ENCODE measurements at regions of chr12 and their contacts with region 1.

Region 1: GRCh38 chr12:74415633-74416032 is 122.0 kb upstream of the ATXN7L3B start:
- DNase-seq: no peak
- H3K4me3 ChIP-seq: no peak overlapping the region
- H3K27ac ChIP-seq: no peak overlapping the region
- H3K27me3 ChIP-seq: no peaks in the 10 kb centered on the region
- CTCF ChIP-seq: peak; percentile 40 to 78 (median 64)

Region 2: DNA sequence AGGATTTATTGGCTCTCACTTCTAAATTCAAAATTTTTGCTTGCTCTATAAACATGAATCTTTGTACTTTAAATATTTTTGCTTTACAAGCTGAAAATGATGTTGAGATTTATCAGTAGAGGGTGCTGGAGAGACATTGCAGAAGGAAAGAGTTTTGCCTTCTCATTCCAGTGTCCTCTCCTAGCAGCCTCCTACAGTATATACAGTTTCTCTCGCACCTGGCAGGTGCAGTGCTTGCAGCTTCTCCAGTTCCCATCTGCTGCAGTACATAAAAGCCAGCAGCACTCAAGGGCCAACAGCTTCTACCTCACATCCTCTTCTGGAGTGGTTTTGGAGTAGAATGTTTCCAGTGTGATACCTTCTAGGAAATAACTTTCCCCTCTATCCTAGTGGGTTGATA is 479.8 kb before region 1 on chr12:
- intact Hi-C with region 1: loop called (anchors 5 to 10 kb)
- DNase-seq: peak in 1 of 10 donors; percentile 28
- H3K4me3 ChIP-seq: no peak overlapping the region
- H3K27ac ChIP-seq: no peak overlapping the region
- H3K27me3 ChIP-seq: no peaks in the 10 kb centered on the region
- CTCF ChIP-seq: peak in 50 of 56 donors; percentile 21 to 65 (median 45)

Region 3: DNA sequence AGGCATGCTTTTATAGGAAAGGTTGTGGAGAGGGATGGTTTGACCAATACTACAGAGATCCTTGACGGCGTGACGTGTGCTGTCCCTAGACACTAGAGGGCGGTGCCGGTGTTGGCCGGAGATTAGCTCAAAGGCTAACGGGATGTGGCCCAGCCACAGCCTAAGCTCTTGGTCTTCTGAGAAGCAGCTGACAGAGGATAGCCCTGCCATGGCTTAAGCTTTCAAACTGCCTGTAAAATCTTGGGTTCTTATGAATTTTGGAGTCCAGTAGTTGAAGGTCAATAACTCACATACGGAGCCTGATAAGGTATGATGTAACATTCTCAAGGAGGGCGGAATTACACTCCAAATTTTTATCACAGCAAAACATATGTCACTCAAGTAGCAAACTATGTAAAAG is 393.7 kb before region 1 on chr12:
- intact Hi-C with region 1: loop called in 1 of 2 experiments (anchors 5 kb)
- DNase-seq: peak in 9 of 10 donors; percentile 25 to 65 (median 50)
- H3K4me3 ChIP-seq: no peak overlapping the region
- H3K27ac ChIP-seq: no peak overlapping the region
- H3K27me3 ChIP-seq: no peaks in the 10 kb centered on the region
- CTCF ChIP-seq: peak in 55 of 56 donors; percentile 14 to 78 (median 54)

Region 4: DNA sequence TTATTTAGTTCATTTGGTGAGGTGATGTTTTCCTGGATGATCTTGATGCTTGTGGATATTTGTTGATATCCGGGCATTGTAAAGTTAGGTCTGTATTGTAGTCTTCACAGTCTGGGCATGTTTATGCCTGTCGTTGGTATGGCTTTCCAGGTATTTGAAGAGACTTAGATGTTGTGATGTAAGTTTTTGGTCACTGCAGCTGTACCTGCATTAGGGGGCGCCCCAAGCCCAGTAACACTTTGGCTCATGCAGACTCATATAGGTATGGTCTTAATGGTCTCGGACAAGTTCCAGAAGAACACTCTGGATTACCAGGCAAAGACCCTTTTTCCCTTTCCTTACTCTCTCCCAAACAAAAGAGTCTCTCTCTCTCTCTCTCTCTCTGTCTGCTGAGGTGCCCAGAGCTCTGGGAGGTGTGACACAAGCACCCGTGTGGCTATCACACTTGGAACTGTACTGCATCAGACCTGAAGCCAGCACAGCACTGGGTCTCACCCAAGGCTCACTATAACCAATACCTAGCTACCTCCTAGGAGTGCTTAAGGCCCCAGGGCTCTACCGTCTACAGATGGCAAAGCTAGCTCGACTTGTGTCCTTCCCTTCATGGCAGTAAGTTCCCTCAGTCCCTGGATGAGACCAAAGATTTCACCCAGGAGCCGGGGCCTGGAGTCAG is 303.8 kb before region 1 on chr12:
- intact Hi-C with region 1: loop called (anchors 2 to 10 kb)
- DNase-seq: peak in 4 of 10 donors; percentile 31 to 61 (median 46)
- H3K4me3 ChIP-seq: no peak overlapping the region
- H3K27ac ChIP-seq: no peak overlapping the region
- H3K27me3 ChIP-seq: no peaks in the 10 kb centered on the region
- CTCF ChIP-seq: peak in 49 of 56 donors; percentile 10 to 67 (median 42)

Region 5: GRCh38 chr12:74166096-74166495 is 249.5 kb before region 1 on chr12:
- intact Hi-C with region 1: no loop called
- DNase-seq: no peak
- H3K4me3 ChIP-seq: no peak overlapping the region
- H3K27ac ChIP-seq: no peak overlapping the region
- H3K27me3 ChIP-seq: no peaks in the 10 kb centered on the region
- CTCF ChIP-seq: no peak

Region 6: GRCh38 chr12:74317078-74317601 is 98.5 kb before region 1 on chr12:
- intact Hi-C with region 1: loop called in 1 of 2 experiments (anchors 10 kb)
- DNase-seq: peak in 4 of 10 donors; percentile 10 to 64 (median 48)
- H3K4me3 ChIP-seq: no peak overlapping the region
- H3K27ac ChIP-seq: peak overlapping the region in 41 of 59 donors; percentile 2 to 81 (median 56)
- H3K27me3 ChIP-seq: no peaks in the 10 kb centered on the region
- CTCF ChIP-seq: peak in 54 of 56 donors; percentile 32 to 68 (median 54)

Region 7: DNA sequence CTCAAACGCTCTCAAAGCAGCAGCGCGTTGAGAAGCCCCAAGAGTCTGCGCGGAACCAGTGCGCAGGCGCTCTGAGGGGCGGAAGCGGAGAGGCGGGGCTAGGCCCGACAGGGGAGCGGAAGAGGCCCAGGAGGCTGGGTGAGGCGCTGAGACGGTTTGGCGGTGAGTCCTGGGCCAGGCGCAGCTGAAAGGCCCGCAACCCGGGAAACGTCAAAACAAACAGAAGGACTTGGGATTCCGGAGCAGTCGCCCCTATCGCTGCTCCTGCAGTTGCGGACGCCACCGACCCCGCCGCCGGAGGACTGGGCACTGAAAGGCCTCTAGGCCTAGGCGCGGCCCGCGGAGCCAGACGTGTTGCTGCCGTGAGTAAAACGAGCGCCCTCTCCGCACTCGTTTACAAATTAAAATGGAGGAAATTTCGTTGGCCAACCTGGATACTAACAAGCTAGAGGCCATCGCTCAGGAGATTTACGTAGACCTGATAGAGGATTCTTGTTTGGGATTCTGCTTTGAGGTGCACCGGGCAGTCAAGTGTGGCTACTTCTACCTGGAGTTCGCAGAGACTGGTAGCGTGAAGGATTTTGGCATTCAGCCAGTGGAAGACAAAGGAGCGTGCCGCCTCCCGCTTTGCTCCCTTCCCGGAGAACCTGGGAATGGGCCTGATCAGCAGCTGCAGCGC is 122.2 kb after region 1 on chr12 and contains the start of gene ATXN7L3B:
- intact Hi-C with region 1: loop called (anchors 10 kb)
- DNase-seq: peak; percentile 81 to 95 (median 86)
- H3K4me3 ChIP-seq: peak within 1 kb of the TSS; percentile 65 to 100 (median 87)
- H3K27ac ChIP-seq: peak within 1 kb of the TSS; percentile 60 to 98 (median 94)
- H3K27me3 ChIP-seq: no peaks in the 10 kb centered on the region
- CTCF ChIP-seq: peak in 6 of 56 donors; percentile 3 to 12 (median 4)
- total RNA-seq, gene ATXN7L3B: 42.4 to 93.4 (median 69.5) TPM

Region 8: DNA sequence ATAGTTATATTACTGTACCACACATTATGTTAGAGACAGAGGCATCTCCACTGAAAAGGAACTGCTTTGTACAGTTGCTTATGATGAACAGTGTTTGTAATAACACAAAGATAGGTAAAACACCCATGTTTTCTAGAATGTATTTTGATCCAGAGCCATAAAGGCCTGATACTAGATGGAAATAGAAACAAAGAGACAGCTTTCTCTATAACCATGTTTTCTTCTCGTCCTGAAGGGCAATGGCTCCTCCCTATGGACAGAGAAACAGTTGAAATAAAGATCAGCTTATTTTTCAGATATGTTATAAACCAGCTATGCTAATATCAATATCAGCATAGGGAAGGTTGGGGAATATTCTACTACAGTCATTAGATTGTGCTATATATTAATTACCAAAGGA is 231.2 kb after region 1 on chr12:
- intact Hi-C with region 1: loop called in 1 of 2 experiments (anchors 10 kb)
- DNase-seq: no peak
- H3K4me3 ChIP-seq: peak overlapping the region in 2 of 59 donors; percentile 1 to 20
- H3K27ac ChIP-seq: peak overlapping the region in 48 of 59 donors; percentile 3 to 82 (median 64)
- H3K27me3 ChIP-seq: no peaks in the 10 kb centered on the region
- CTCF ChIP-seq: peak in 55 of 56 donors; percentile 28 to 80 (median 59)

Region 9: GRCh38 chr12:74752215-74752614 is 336.6 kb after region 1 on chr12:
- intact Hi-C with region 1: no loop called
- DNase-seq: no peak
- H3K4me3 ChIP-seq: no peak overlapping the region
- H3K27ac ChIP-seq: no peak overlapping the region
- H3K27me3 ChIP-seq: no peaks in the 10 kb centered on the region
- CTCF ChIP-seq: no peak

Measured in dorsolateral prefrontal cortex (tissue), 120 donors.